ENCODE measurements at regions of chr10 and their contacts with region 1.

Region 1: DNA sequence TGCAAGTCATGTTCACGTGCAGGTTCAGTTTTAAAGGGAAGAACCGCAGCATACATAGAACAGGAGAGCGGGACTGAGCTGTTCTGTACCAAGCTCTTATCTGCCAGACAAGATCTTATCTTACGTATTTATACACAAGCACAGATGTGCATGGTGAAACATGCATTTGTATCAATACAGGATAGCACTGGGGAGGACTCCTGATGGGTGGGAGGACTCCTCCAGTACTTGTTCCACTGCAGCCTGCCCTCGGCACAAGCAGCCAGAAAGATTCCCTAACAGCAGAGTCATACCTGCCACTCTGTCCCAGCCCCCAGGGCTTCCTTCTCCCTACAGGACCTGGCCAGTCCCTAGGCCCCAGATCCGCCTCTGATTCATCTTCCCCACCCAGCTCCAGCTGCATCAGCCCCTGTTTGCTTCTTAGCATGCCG is 13.2 kb upstream of the PRKCQ start:
- DNase-seq: peak; percentile 77
- H3K4me3 Mint-ChIP-seq: peak overlapping the region; percentile 51
- H3K27ac Mint-ChIP-seq: peak overlapping the region; percentile 93
- H3K4me1 Mint-ChIP-seq: peaks cover 82% of the 10 kb centered on the region
- H3K27me3 Mint-ChIP-seq: no peaks in the 10 kb centered on the region

Region 2: GRCh38 chr10:6348096-6348874 is 245.0 kb before region 1 on chr10:
- intact Hi-C with region 1: no loop called
- DNase-seq: peak; percentile 91
- H3K4me3 Mint-ChIP-seq: peak overlapping the region; percentile 78
- H3K27ac Mint-ChIP-seq: peak overlapping the region; percentile 92
- H3K4me1 Mint-ChIP-seq: peaks cover 46% of the 10 kb centered on the region
- H3K27me3 Mint-ChIP-seq: no peaks in the 10 kb centered on the region

Region 3: DNA sequence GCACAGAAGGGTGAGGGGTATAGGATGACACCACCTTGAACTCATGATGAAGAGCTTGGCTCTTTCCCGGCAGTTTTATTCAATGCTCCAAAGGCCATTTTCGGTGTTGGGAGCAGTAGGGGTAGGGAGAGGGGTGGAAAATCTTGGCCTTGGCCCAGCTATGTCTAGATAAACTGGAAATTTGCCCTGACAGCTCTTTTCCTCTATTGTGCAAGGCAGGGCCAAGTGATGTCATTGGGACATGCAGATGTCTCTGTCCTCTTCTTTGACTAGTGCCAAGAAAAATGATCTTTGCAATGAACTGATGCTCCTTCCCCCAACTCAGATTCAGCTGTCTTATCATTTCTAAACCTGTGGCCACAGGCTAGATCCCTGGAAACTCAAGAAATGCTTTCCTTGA is 14.5 kb after region 1 on chr10:
- intact Hi-C with region 1: loop called (anchors 1 kb)
- DNase-seq: no peak
- H3K4me3 Mint-ChIP-seq: no peak overlapping the region
- H3K27ac Mint-ChIP-seq: peak overlapping the region; percentile 91
- H3K4me1 Mint-ChIP-seq: peaks cover 61% of the 10 kb centered on the region
- H3K27me3 Mint-ChIP-seq: no peaks in the 10 kb centered on the region

Region 4: DNA sequence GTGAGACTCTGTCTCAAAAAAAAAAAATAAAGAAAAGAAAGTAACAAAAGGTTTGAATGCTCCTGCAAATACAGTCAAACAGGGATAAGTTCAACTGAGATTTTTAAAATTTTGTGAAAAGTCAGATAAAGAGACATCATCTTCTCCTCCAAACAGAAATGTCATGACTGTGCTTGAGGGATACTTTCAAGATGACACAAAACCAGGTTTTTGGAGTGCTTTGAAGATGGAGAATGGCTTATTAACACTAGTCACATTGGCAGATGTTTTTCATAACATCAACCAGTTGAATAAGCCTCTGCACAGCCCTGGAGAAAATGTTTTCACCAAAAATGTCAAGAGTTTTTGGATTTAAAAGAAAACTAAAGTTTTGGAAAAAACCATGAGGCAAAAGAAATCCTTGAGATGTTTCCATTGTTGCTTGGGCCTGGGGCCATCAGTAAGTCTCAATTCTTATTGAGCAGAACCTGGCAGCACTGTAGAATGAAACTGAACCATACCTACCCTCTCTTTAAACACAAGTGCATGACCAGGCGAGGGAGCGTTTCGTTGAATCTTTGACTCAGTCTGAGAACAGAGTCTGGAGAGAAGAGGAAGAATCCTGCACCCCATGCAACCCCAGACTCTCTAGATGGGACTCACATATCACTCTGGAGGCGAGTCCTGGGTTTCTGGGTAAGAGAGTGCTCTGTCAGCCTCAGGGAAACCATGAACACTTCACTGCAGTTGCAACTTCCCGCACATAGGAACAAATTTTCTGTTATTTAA is 24.2 kb after region 1 on chr10:
- intact Hi-C with region 1: loop called (anchors 1 kb)
- DNase-seq: no peak
- H3K4me3 Mint-ChIP-seq: peak overlapping the region; percentile 18
- H3K27ac Mint-ChIP-seq: peak overlapping the region; percentile 86
- H3K4me1 Mint-ChIP-seq: peaks cover 57% of the 10 kb centered on the region
- H3K27me3 Mint-ChIP-seq: no peaks in the 10 kb centered on the region

Region 5: GRCh38 chr10:8035006-8035640 is 1441.9 kb after region 1 on chr10:
- intact Hi-C with region 1: no loop called
- DNase-seq: peak; percentile 62
- H3K4me3 Mint-ChIP-seq: no peak overlapping the region
- H3K27ac Mint-ChIP-seq: peak overlapping the region; percentile 61
- H3K4me1 Mint-ChIP-seq: peaks cover 13% of the 10 kb centered on the region
- H3K27me3 Mint-ChIP-seq: peaks cover 74% of the 10 kb centered on the region